ENCODE measurements at regions of chr9 and their contacts with region 1.

Region 1: DNA sequence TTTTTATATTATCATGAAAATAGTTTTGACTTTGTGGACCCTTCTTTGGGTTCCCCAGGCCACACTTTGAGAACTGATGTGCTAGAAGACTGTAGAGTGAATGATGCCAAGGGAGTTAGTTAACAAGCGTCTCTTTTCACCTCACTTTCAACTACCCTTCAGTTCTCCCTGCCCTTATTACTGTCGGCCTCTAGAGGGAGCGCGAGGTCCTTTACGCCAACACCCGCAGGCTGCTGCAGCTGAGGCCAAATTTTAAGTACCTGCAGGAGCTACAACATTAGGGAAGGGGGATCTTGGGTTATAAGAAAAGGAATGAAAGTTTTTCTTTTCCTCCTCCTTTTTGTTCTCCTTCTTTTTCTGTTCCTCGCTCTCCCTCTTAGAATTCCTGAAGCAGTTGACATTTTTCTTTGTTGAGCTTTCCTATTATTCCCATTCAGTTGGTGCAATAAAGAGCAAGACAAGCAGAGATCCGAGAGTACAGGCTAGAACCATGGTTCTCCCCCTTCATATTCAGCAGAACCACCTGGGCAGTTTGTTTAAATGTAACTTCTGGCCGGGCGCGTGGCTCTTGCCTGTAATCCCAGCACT is 84.0 kb downstream of the ZFAND5 start:
- DNase-seq: peak; percentile 73
- CTCF ChIP-seq: peak; percentile 97

Region 2: GRCh38 chr9:72592502-72593403 is 311.7 kb after region 1 on chr9:
- in situ Hi-C with region 1: loop called (anchors 10 kb)
- DNase-seq: peak; percentile 46
- CTCF ChIP-seq: peak; percentile 73

Region 3: GRCh38 chr9:72807765-72808445 is 526.9 kb after region 1 on chr9:
- in situ Hi-C with region 1: loop called (anchors 25 kb)
- DNase-seq: no peak
- CTCF ChIP-seq: peak; percentile 19

Measured in GM13977 (cell line).